ENCODE measurements at regions of chr5 and their contacts with region 1.

Region 1: DNA sequence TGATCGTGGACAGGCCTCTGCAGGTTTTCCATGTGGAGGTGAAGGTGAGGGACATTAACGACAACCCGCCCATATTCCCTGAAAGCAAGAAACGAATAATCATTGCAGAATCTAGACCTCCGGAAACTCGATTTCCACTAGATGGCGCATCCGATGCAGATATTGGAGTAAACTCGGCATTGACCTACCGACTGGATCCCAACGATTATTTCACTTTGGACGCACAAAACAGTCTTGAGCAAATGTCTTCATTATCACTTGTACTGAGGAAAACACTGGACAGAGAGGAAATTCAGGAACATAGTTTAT is 621 bp downstream of the PCDHA13 start:
- DNase-seq: peak in 1 of 2 experiments; percentile 73
- H3K4me3 ChIP-seq: peak overlapping the region; percentile 11 to 60 (median 58); a peak in 6 of 8 replicates
- H3K27ac ChIP-seq: no peak overlapping the region
- H3K4me1 ChIP-seq: no peaks in the 10 kb centered on the region
- H3K27me3 ChIP-seq: no peaks in the 10 kb centered on the region
- CTCF ChIP-seq: peak in 2 of 3 experiments; percentile 70 to 80; a peak in 3 of 4 replicates
- EP300 ChIP-seq: no peak
- POLR2A ChIP-seq: no peak
- RAD21 ChIP-seq: peak; percentile 84 to 89

Region 2: GRCh38 chr5:140862441-140863295 is 19.9 kb before region 1 on chr5:
- CTCF ChIA-PET with region 1: interaction called, 25 read pairs
- POLR2A ChIA-PET with region 1: no interaction called
- DNase-seq: no peak
- H3K4me3 ChIP-seq: no peak overlapping the region
- H3K27ac ChIP-seq: no peak overlapping the region
- H3K4me1 ChIP-seq: no peaks in the 10 kb centered on the region
- H3K27me3 ChIP-seq: no peaks in the 10 kb centered on the region
- CTCF ChIP-seq: no peak
- EP300 ChIP-seq: no peak
- POLR2A ChIP-seq: no peak
- RAD21 ChIP-seq: no peak

Region 3: GRCh38 chr5:141050622-141051525 is 168.3 kb after region 1 on chr5 and contains the start of gene PCDHB1:
- CTCF ChIA-PET with region 1: interaction called, 16 read pairs
- POLR2A ChIA-PET with region 1: no interaction called
- DNase-seq: no peak
- H3K4me3 ChIP-seq: peak within 1 kb of the TSS; percentile 42 to 65 (median 60)
- H3K27ac ChIP-seq: no peak within 1 kb of the TSS
- H3K4me1 ChIP-seq: peaks cover 0 to 9% (median 3%) of the 10 kb centered on the region in 4 experiments; a peak in 5 of 7 replicates
- H3K27me3 ChIP-seq: peaks cover 0 to 14% (median 11%) of the 10 kb centered on the region in 4 experiments; a peak in 6 of 7 replicates
- CTCF ChIP-seq: no peak
- EP300 ChIP-seq: no peak
- POLR2A ChIP-seq: no peak
- RAD21 ChIP-seq: no peak
- total RNA-seq, gene PCDHB1: 0.04 and 0.08 TPM in 2 replicates

Measured in H1 (cell line).